HepG2 (cell line): ENCODE measurements at regions of chr7 and their contacts with region 1.

Region 1: GRCh38 chr7:129644634-129645230 is 33.2 kb downstream of the NRF1 start:
- DNase-seq: peak; percentile 37
- ATAC-seq: no peak; the same call in 2 of the 3 replicates
- H3K4me3 ChIP-seq: no peak overlapping the region
- H3K27ac ChIP-seq: no peak overlapping the region
- H3K4me1 ChIP-seq: no peaks in the 10 kb centered on the region
- H3K27me3 ChIP-seq: no peaks in the 10 kb centered on the region
- CTCF ChIP-seq: peak; percentile 39
- EP300 ChIP-seq: no peak
- POLR2A ChIP-seq: no peak
- RAD21 ChIP-seq: no peak; the same call in 1 of the 2 replicates

Region 2: DNA sequence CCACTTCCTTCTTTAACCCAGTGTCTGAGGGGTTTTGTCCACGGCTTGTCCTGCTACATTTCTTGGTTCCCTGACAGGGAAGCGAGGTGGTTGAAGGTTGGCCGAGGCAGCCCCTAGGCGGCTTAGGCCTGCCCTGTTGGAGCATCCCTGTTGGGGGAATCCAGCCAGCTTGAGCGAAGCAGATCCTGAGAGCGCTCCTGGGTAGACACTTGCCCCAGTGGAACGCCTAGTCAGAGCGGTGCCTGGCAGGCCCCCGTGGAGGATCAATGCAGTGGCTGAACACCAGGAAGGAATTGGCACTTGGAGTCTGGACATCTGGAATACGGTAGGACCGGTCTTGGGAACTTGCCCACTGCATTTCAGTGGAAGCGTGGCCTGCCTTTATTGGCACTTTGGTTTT is 65.9 kb before region 1 on chr7:
- CTCF ChIA-PET with region 1: no interaction called
- POLR2A ChIA-PET with region 1: no interaction called
- in situ Hi-C with region 1: no loop called
- intact Hi-C with region 1: loop called (anchors 1 kb)
- DNase-seq: no peak
- ATAC-seq: no peak
- H3K4me3 ChIP-seq: no peak overlapping the region
- H3K27ac ChIP-seq: no peak overlapping the region
- H3K4me1 ChIP-seq: no peaks in the 10 kb centered on the region
- H3K27me3 ChIP-seq: no peaks in the 10 kb centered on the region; a peak in 1 of 5 replicates
- CTCF ChIP-seq: no peak
- EP300 ChIP-seq: no peak
- POLR2A ChIP-seq: no peak
- RAD21 ChIP-seq: no peak